ENCODE measurements at regions of chr11 and their contacts with region 1.

Region 1: DNA sequence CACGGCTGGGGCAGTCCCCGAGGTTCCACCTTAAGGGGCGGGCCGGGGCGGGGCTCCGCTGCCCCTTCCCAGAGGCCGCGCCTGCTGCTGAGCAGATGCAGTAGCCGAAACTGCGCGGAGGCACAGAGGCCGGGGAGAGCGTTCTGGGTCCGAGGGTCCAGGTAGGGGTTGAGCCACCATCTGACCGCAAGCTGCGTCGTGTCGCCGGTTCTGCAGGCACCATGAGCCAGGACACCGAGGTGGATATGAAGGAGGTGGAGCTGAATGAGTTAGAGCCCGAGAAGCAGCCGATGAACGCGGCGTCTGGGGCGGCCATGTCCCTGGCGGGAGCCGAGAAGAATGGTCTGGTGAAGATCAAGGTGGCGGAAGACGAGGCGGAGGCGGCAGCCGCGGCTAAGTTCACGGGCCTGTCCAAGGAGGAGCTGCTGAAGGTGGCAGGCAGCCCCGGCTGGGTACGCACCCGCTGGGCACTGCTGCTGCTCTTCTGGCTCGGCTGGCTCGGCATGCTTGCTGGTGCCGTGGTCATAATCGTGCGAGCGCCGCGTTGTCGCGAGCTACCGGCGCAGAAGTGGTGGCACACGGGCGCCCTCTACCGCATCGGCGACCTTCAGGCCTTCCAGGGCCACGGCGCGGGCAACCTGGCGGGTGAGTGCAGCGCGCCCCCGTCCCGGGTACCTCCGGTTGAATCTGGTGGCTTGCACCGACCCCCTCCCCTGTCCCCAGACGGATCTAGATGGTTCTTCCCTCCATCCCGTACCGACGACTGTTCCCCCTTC is at the start of gene SLC3A2:
- DNase-seq: peak; percentile 96
- H3K4me3 ChIP-seq: peak within 1 kb of the TSS; percentile 72 to 99 (median 88)
- H3K27ac ChIP-seq: peak within 1 kb of the TSS; percentile 97 to 100 (median 98)
- H3K4me1 ChIP-seq: peaks cover 0 to 55% (median 49%) of the 10 kb centered on the region in 4 donors
- H3K27me3 ChIP-seq: no peaks in the 10 kb centered on the region
- CTCF ChIP-seq: peak; percentile 45 to 64 (median 58)
- EP300 ChIP-seq: peak in 1 of 4 donors; percentile 24
- POLR2A ChIP-seq: peak; percentile 99
- total RNA-seq, gene SLC3A2: 44.0 to 70.4 (median 50.4) TPM

Region 2: DNA sequence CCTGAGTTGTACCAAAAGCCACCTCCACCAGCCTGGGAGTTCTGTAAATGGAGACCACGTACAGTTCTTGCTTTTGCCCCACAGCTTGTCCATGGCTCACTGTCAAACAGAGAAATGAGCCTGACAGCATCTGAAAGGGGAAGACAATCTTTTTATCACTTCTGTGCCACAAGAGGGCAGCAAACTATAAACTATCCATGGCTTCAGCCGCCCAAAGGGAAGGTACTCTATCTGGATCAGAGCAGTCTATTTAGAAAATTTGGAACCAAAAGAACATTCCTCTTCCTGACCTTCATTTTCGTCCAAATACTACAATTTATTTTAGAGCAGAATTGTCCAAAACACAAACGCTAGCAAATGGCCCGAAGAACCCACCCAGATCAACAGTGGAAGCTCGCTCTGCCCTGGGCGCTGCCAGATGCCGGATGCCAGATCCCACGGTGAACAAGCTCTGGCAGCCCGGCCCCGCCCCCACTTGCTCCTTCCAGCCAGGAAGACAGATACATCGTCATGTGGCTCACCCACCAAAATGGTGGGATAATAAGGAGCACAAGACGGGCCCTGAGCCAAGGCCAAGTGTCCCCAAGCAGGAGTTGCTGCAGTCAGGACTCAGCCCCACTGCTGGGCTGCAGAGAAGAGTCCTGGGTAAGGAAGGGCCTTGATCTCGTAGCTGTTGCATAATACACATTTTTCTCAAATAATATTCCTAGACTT is 486.0 kb before region 1 on chr11:
- intact Hi-C with region 1: loop called (anchors 10 kb)
- DNase-seq: peak; percentile 94
- H3K4me3 ChIP-seq: peak overlapping the region in 3 of 4 donors; percentile 29 to 41 (median 40)
- H3K27ac ChIP-seq: peak overlapping the region; percentile 82 to 95 (median 86)
- H3K4me1 ChIP-seq: peaks cover 0 to 56% (median 49%) of the 10 kb centered on the region in 4 donors
- H3K27me3 ChIP-seq: no peaks in the 10 kb centered on the region
- CTCF ChIP-seq: peak; percentile 50 to 75 (median 68)
- EP300 ChIP-seq: no peak
- POLR2A ChIP-seq: no peak

Region 3: DNA sequence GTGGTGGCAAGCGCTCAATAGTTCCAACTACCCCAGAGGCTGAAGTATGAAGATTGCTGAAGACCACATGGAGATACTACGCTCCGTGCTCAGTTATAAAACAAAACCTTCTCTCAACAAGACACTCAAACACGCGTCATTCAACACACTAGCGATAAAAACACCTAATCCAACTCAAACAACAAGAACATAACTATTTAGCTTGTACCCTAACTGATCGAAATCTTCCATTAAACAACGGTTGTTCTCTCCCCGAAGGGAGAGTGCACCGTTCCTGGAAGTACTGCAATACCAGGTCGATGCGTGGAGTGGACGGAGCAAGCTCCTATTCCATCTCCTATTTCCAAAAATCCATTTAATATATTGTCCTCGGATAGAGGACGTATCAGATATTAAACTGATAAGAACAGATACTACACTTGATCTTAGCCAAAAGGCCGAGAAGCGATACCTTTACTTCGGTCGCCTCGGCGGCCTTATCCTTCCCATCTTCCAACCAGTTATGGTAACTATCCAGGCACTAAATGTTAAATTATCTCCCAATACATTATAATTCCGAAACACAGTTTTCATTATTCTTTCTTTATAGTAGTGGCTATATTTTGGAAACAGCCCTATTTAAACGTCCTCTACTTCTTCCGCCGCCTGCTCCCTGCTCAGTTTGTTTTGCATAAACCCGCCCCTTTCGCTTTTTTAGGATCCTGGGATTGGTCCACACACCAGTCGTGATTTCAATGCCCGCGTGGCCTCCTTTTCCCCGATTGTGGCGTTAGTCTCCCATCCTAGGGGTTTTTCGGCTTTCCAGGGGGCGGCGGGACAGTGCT is 39.4 kb before region 1 on chr11:
- intact Hi-C with region 1: loop called (anchors 2 kb)
- DNase-seq: peak; percentile 95
- H3K4me3 ChIP-seq: peak overlapping the region; percentile 30 to 92 (median 84)
- H3K27ac ChIP-seq: peak overlapping the region; percentile 96 to 98 (median 98)
- H3K4me1 ChIP-seq: peaks cover 0 to 38% (median 27%) of the 10 kb centered on the region in 4 donors
- H3K27me3 ChIP-seq: no peaks in the 10 kb centered on the region
- CTCF ChIP-seq: no peak
- EP300 ChIP-seq: peak in 2 of 4 donors; percentile 3 to 75
- POLR2A ChIP-seq: peak; percentile 100

Region 4: GRCh38 chr11:62855571-62856332 is 25.2 kb before region 1 on chr11:
- intact Hi-C with region 1: loop called (anchors 2 kb)
- DNase-seq: peak; percentile 98
- H3K4me3 ChIP-seq: peak overlapping the region; percentile 59 to 87 (median 70)
- H3K27ac ChIP-seq: peak overlapping the region; percentile 79 to 93 (median 84)
- H3K4me1 ChIP-seq: peaks cover 0 to 35% (median 25%) of the 10 kb centered on the region in 4 donors
- H3K27me3 ChIP-seq: no peaks in the 10 kb centered on the region
- CTCF ChIP-seq: no peak
- EP300 ChIP-seq: peak in 1 of 4 donors; percentile 78
- POLR2A ChIP-seq: peak; percentile 97 to 98